Activated naive CD4-positive, alpha-beta T cell treated with anti-CD3 and anti-CD28 coated beads for 36 hours (primary cell): ENCODE measurements at regions of chr1 and their contacts with region 1.

Region 1: GRCh38 chr1:9629445-9630201 is 21.9 kb upstream of the PIK3CD start:
- DNase-seq: peak; percentile 87
- H3K4me3 Mint-ChIP-seq: peak overlapping the region; percentile 85
- H3K27ac Mint-ChIP-seq: peak overlapping the region; percentile 93
- H3K4me1 Mint-ChIP-seq: peaks cover 67% of the 10 kb centered on the region
- H3K27me3 Mint-ChIP-seq: no peaks in the 10 kb centered on the region

Region 2: DNA sequence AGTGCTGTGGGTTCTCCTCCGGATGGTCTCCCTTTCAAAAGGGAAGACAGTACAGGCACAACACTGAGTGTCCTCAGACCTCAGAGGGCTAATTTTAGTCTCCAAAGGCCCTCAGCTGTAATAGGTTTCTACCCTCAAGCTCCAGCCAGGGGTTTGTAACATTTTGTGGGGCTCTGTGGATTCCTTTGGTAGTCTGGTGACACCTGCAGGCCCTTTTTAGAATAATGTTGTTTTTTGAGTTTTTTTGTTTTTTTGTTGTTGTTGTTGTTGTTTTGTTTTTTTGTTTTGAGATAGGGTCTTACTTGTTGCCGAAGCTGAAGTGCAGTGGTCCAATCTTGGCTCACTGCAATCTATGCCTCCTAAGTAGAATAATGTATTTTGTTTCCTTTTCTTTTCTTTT is 55.9 kb before region 1 on chr1:
- CTCF ChIA-PET with region 1: no interaction called
- intact Hi-C with region 1: no loop called
- DNase-seq: no peak
- H3K4me3 Mint-ChIP-seq: no peak overlapping the region
- H3K27ac Mint-ChIP-seq: no peak overlapping the region
- H3K4me1 Mint-ChIP-seq: no peaks in the 10 kb centered on the region
- H3K27me3 Mint-ChIP-seq: no peaks in the 10 kb centered on the region

Region 3: DNA sequence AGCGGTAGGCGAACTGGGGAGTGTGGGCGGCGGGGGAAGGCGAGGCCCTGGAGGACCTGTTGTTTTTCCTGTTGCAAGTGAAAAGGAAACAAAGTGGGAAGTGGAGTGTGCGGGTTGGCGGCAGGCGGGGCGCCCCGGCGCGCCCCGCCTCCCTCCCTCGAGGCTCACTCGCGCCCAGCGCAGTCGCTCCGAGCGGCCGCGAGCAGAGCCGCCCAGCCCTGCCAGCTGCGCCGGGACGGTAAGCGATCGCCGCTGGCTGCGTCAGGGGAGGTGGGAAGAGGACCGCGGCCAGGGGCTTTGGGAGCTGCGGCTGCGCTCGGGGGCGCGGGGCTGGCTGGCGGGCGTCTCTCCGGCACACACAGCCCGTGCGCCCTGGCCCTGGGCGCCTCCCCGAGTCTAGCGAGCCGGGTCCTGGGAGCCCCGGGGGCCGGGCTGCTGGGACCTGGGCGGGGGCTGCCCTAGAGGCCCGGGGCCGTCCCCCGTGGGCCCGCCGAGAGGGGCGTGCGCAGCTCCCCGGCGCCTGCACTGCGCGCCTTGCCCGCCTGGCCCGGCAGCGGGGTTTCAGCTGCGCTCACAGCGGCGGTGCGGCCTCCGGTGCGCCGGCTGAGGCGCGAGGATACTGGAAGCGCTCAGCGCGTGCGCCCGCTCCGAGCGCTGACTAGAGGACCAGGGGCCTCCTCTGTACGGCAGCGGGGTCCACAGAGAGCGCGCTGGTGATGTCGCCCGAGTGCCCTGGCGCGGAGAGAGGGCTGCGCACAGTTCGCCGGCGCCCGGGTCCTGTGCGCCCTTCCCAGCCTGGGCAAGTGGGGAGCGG is 22.1 kb after region 1 on chr1 and contains the start of gene PIK3CD:
- CTCF ChIA-PET with region 1: interaction called, 73 read pairs
- intact Hi-C with region 1: loop called (anchors 1 kb)
- DNase-seq: peak; percentile 63
- H3K4me3 Mint-ChIP-seq: peak within 1 kb of the TSS; percentile 99
- H3K27ac Mint-ChIP-seq: peak within 1 kb of the TSS; percentile 100
- H3K4me1 Mint-ChIP-seq: peaks cover 46% of the 10 kb centered on the region
- H3K27me3 Mint-ChIP-seq: no peaks in the 10 kb centered on the region
- total RNA-seq, gene PIK3CD: 96.6 to 101 TPM

Region 4: GRCh38 chr1:9689011-9689706 is 59.5 kb after region 1 on chr1:
- CTCF ChIA-PET with region 1: interaction called, 5 read pairs
- intact Hi-C with region 1: loop called (anchors 1 kb)
- DNase-seq: peak; percentile 83
- H3K4me3 Mint-ChIP-seq: peak overlapping the region; percentile 67
- H3K27ac Mint-ChIP-seq: peak overlapping the region; percentile 46
- H3K4me1 Mint-ChIP-seq: peaks cover 69% of the 10 kb centered on the region
- H3K27me3 Mint-ChIP-seq: no peaks in the 10 kb centered on the region

Region 5: GRCh38 chr1:9823943-9824701 is 194.5 kb after region 1 on chr1 and contains the start of gene CLSTN1:
- CTCF ChIA-PET with region 1: interaction called, 4 read pairs
- intact Hi-C with region 1: loop called (anchors 1 kb)
- DNase-seq: peak; percentile 91
- H3K4me3 Mint-ChIP-seq: peak within 1 kb of the TSS; percentile 94
- H3K27ac Mint-ChIP-seq: peak within 1 kb of the TSS; percentile 8
- H3K4me1 Mint-ChIP-seq: peaks cover 41% of the 10 kb centered on the region
- H3K27me3 Mint-ChIP-seq: peaks cover 14% of the 10 kb centered on the region
- total RNA-seq, gene CLSTN1: 24.0 to 24.9 TPM

Region 6: DNA sequence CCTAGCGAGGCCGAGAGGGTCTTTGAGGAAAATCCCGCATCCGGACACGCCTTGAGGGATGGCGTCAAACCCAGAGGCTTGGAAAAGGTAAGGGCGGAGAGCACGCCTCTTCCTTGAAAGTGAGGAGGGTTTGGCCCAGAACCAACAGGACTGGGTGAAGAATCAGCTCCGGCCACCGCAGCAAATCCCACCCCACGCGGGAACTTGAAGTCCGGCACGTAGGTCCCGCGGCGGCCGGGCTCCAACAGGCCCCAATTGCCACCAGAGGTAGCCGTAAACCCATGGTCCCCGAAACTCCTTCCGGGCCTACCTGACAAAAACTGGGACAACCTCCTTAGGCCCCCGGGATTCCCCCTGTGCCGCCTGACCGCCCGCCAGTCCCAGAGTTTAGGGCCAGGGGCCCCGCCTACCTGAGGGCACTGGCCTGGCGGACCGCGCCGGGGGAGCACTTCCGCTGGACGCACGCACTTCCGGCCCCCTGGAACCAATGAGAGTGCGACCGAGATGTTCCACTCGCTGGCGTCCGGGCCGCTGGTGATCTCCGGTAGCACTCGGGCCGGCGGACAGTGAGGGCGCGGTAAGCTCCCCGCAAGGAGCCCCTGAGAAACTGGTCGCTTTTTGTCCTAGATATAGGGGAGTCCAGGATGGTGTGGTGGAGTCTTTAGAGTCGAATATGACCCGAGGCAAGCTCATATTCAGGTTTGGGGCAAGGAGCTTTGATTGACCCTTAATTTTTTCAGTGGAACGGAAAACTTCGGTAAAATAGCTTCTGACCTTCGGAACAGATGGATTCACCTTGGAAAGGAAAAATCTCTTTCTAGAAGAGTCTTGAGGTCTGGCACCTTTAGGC is 313.5 kb after region 1 on chr1 and contains the starts of genes LZIC and NMNAT1:
- CTCF ChIA-PET with region 1: no interaction called
- intact Hi-C with region 1: loop called (anchors 5 kb)
- DNase-seq: peak; percentile 94
- H3K4me3 Mint-ChIP-seq: peak within 1 kb of the TSS; percentile 95
- H3K27ac Mint-ChIP-seq: peak within 1 kb of the TSS; percentile 92
- H3K4me1 Mint-ChIP-seq: peaks cover 27% of the 10 kb centered on the region
- H3K27me3 Mint-ChIP-seq: no peaks in the 10 kb centered on the region
- total RNA-seq, gene LZIC: 26.1 to 27.0 TPM
- total RNA-seq, gene NMNAT1: 7.5 to 8.0 TPM